WTC11 (cell line): ENCODE measurements at regions of chr17 and their contacts with region 1.

Region 1: DNA sequence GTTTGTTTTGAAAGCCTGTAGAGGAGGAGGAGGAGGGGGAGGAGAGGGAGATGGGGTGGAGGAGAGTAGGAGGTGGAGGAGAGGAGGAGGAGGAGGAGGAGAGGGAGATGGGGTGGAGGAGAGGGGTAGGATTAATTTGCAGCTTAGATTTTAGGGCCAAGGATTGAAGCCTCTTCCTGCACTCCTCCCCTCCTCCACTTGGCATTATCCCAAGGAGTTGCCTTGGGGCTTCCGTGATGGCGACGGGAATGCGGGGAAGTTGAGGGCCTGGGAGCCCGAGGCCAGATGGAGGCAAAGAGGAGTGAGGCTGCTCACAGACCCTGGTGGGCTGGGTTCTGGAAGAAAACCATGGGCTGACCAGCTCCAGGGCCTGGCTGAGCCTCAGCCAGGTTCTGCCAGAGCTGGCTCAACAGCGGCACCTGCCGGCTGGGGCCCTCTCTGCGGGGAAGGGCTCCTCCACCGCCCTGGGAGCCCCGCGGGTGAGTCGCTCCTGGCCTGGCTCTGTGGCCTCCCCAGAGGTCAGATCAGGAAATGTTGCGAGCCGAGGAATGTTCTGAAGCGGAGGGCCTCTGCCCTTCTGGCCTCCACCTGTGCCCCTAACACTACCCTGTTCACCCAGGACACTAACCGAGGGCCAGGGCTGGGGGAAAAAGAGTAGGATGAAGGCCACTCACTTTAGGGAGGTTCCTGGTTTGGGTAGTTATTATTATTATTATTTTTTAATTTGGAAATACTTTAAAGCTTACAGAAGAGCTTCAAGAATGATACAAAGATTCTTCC is 23.9 kb upstream of the FMNL1 start:
- DNase-seq: peak; percentile 99
- ATAC-seq: peak; percentile 98
- H3K4me3 Mint-ChIP-seq: no peak overlapping the region
- H3K27ac Mint-ChIP-seq: peak overlapping the region; percentile 84
- H3K4me1 Mint-ChIP-seq: peaks cover 18% of the 10 kb centered on the region
- H3K27me3 Mint-ChIP-seq: peaks cover under 1% of the 10 kb centered on the region; the same call in 1 of the 2 replicates
- CTCF ChIP-seq: peak; percentile 94

Region 2: GRCh38 chr17:45155029-45155428 is 42.7 kb before region 1 on chr17:
- CTCF ChIA-PET with region 1: interaction called, 275 read pairs
- POLR2A ChIA-PET with region 1: interaction called, 61 read pairs
- DNase-seq: no peak
- ATAC-seq: no peak
- H3K4me3 Mint-ChIP-seq: no peak overlapping the region
- H3K27ac Mint-ChIP-seq: no peak overlapping the region; the same call in 1 of the 2 replicates
- H3K4me1 Mint-ChIP-seq: peaks cover 36% of the 10 kb centered on the region
- H3K27me3 Mint-ChIP-seq: no peaks in the 10 kb centered on the region
- CTCF ChIP-seq: no peak

Region 3: DNA sequence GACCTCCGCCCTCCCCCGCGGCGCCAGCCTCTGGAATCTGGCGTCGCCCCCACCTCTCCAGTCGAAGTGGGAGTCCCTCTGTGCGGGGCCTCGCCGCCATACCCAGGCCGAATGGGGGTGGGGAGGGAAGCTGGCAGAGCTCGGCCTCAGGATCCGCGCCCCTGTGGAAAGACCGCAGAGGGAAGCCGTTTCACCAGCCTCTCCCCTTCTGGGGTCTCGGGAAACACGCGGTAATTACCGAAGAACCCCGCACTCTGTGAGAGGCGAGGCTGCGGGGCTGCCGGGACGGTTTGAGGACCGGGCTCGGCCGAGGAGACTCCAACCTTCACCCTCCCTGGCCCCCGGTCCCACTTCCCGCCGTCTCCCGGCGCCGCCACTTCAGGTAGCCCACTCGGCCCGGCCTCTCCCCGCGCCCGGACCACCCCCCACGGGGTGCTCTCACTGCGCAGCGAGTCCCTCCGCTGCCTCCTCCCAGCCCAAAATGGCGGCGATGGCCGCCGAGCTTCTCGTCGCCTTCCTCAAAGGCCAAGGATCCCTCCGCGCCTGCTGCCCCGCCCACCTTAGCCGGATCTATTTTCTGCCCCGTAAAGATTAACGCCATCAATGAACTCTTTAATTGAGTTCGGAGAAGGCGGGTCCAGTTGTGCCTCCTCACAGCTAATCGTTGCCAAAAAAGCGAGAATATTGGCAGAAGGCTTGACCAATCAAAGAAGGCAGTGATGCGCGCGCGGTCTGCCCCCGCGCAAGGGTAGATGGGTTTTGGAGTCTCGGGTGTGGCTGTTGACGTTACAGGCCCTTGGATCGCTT is 36.5 kb before region 1 on chr17:
- CTCF ChIA-PET with region 1: interaction called, 65 read pairs
- POLR2A ChIA-PET with region 1: interaction called, 29 read pairs
- DNase-seq: peak; percentile 98
- ATAC-seq: peak; percentile 93
- H3K4me3 Mint-ChIP-seq: peak overlapping the region; percentile 99
- H3K27ac Mint-ChIP-seq: peak overlapping the region; percentile 95
- H3K4me1 Mint-ChIP-seq: peaks cover 32% of the 10 kb centered on the region
- H3K27me3 Mint-ChIP-seq: no peaks in the 10 kb centered on the region
- CTCF ChIP-seq: no peak

Region 4: GRCh38 chr17:45172454-45173286 is 25.1 kb before region 1 on chr17:
- CTCF ChIA-PET with region 1: interaction called, 99 read pairs
- POLR2A ChIA-PET with region 1: interaction called, 7 read pairs
- DNase-seq: peak; percentile 38
- ATAC-seq: peak; percentile 20
- H3K4me3 Mint-ChIP-seq: peak overlapping the region; percentile 5; the same call in 1 of the 2 replicates
- H3K27ac Mint-ChIP-seq: peak overlapping the region; percentile 98
- H3K4me1 Mint-ChIP-seq: peaks cover 29% of the 10 kb centered on the region
- H3K27me3 Mint-ChIP-seq: no peaks in the 10 kb centered on the region
- CTCF ChIP-seq: no peak

Region 5: GRCh38 chr17:45184144-45184543 is 13.6 kb before region 1 on chr17:
- CTCF ChIA-PET with region 1: interaction called, 15 read pairs
- POLR2A ChIA-PET with region 1: no interaction called
- DNase-seq: no peak
- ATAC-seq: no peak
- H3K4me3 Mint-ChIP-seq: no peak overlapping the region
- H3K27ac Mint-ChIP-seq: no peak overlapping the region; the same call in 1 of the 2 replicates
- H3K4me1 Mint-ChIP-seq: no peaks in the 10 kb centered on the region
- H3K27me3 Mint-ChIP-seq: no peaks in the 10 kb centered on the region
- CTCF ChIP-seq: no peak

Region 6: DNA sequence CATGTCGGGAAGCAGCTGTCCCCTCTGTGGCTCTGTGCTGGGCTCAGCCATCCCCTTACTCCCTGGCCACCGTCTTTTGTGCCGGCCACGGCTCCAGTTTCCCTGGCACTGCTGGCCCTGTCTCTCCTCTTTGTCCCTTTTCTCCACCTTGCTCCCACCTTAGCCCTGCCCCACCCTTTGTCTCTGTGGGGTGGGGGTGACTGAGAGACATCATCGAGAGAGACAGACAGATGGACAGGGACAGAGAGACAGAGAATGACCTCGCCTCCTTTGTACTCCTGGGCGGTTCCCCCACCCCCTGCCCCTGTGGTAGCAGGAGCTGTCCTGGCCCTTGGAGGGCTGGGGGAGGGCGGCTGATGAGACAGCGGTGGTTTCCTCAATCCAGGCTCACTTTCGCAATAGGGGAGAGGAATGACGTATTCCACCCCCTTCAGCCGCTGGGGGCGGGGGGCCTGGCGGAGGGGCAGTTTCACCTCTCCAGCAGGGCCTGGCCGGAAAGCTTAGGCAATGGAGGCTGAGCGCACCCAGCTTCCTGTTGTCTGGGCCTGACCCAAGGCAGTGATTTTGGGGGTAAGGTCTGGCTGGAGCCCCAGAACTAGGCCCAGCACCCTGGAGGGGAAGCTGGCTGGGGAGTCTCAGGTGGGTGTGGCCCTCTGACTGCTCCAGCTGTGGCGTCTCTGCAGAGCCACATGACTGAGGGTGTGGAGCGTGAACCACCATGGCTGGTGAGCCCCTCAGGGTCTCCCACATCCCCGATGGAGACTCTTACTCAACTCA is 31.2 kb after region 1 on chr17:
- CTCF ChIA-PET with region 1: interaction called, 12 read pairs
- POLR2A ChIA-PET with region 1: no interaction called
- DNase-seq: peak; percentile 59
- ATAC-seq: peak; percentile 27
- H3K4me3 Mint-ChIP-seq: no peak overlapping the region
- H3K27ac Mint-ChIP-seq: no peak overlapping the region
- H3K4me1 Mint-ChIP-seq: peaks cover 20% of the 10 kb centered on the region
- H3K27me3 Mint-ChIP-seq: peaks cover 26% of the 10 kb centered on the region
- CTCF ChIP-seq: no peak

Region 7: GRCh38 chr17:45235416-45236281 is 37.9 kb after region 1 on chr17:
- CTCF ChIA-PET with region 1: interaction called, 15 read pairs
- POLR2A ChIA-PET with region 1: no interaction called
- DNase-seq: peak; percentile 94
- ATAC-seq: peak; percentile 69
- H3K4me3 Mint-ChIP-seq: no peak overlapping the region
- H3K27ac Mint-ChIP-seq: no peak overlapping the region
- H3K4me1 Mint-ChIP-seq: peaks cover 9% of the 10 kb centered on the region
- H3K27me3 Mint-ChIP-seq: peaks cover 63% of the 10 kb centered on the region
- CTCF ChIP-seq: peak; percentile 81